ENCODE measurements at regions of chr5 and their contacts with region 1.

Region 1: DNA sequence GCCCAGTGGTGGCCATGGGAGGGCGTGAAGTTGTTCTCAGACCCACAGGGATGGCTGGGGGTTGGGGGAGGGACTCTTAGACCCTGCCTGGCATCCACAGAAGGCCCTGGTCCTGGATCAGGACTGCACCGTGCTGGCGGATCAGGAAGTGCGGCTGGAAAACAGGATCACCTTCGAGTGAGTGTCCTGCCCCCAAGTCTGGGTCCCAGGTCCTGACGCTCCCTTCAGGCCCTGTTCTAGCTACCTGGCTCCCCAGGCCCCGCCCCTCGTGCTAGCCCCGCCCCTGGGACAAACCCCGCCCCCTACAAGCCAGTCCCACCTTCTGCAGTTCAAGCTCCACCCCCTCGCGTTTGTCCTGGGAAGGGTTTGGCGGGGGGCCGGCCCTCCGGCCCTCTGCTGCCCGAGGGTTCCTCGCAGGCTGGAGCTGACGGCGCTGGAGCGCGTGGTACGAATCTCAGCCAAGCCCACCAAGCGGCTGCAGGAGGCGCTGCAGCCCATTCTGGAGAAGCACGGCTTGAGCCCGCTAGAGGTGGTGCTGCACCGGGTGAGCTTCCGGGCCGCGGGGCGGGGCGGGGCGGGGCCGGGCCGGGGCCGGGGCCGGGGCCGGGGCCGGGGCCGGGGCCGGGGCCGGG is 12.9 kb downstream of the RGS14 start:
- DNase-seq: peak; percentile 88
- H3K4me3 Mint-ChIP-seq: peak overlapping the region; percentile 76
- H3K27ac Mint-ChIP-seq: no peak overlapping the region
- H3K4me1 Mint-ChIP-seq: peaks cover 46% of the 10 kb centered on the region
- H3K27me3 Mint-ChIP-seq: no peaks in the 10 kb centered on the region

Region 2: DNA sequence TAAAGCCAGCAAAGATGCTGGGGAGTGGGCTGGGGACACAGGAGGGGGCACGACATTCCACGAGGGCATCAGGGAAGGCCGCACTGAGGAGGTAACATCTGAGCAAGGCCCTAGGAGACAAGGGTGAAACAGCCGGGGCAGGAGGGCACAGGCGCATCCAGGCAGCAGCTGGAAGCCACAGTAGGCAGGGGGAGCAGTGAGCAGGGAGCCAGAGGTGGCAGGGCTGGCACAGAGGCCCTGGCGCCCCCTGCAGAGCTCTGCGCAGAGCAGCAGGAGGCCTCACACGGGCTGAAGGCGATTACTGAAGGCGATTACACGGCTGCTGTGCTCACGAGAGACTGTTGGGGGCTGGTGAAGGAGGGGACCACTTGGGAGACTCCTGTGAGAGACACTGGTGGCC is 34.5 kb before region 1 on chr5:
- intact Hi-C with region 1: no loop called
- DNase-seq: no peak
- H3K4me3 Mint-ChIP-seq: no peak overlapping the region
- H3K27ac Mint-ChIP-seq: peak overlapping the region; percentile 2
- H3K4me1 Mint-ChIP-seq: peaks cover 9% of the 10 kb centered on the region
- H3K27me3 Mint-ChIP-seq: no peaks in the 10 kb centered on the region

Region 3: DNA sequence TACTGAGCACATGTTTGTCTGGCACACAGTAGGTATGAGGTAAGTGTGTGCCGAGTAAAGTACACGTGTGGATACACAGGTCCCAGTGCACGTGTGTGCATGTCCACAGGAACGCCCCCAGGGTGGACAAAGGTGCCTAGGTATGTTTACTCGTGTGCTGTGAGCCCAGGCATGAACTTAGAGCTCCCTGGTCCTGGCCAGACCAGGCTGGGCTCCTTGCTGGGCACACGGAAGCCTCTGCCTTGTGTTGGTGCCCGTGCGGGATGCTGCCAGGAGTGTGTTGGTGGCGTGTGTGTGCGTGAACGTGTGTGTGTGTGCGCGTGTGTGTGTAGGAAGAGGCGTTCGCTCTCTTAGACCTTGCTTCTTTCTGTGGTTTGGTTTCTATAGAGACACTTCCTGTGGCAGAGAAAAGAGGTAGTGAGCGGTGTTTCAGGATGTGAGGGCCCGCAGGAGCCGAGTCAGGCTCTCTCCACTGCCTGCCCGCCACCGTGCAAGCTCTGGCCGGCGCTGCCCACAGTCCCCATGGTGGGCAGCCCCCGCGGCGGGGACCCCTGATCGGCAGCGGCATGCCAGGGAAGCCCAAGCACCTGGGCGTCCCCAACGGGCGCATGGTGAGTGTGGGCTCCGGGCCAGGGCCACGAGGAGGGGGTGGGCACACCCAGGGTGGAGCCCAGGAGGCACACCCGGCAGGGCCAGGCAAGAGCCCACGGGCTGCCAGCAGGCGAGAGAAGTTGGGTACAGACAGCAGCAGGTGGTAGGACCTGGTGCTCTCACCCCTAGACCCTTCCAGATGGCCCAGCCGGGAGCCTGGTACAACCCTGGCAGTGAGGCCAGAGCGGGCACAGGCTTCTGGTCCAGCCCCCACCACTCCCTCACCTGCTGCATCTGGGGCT is 12.9 kb before region 1 on chr5 and contains the start of gene RGS14:
- intact Hi-C with region 1: loop called (anchors 2 kb)
- DNase-seq: peak; percentile 92
- H3K4me3 Mint-ChIP-seq: peak within 1 kb of the TSS; percentile 84
- H3K27ac Mint-ChIP-seq: peak within 1 kb of the TSS; percentile 97
- H3K4me1 Mint-ChIP-seq: peaks cover 65% of the 10 kb centered on the region
- H3K27me3 Mint-ChIP-seq: no peaks in the 10 kb centered on the region
- total RNA-seq, gene RGS14: 45.3 and 49.3 TPM in 2 replicates

Measured in activated CD4-positive, alpha-beta T cell treated with anti-CD3 and anti-CD28 coated beads, Interleukin-2, amount 10 ng/mL, durations not matched to agents 24 days and 14 days (primary cell).